Activated T-helper 2 cell treated with anti-CD3 and anti-CD28 coated beads, Interferon-gamma antibody, Interleukin-2, Interleukin-4, amounts not matched to agents 10 μg/mL and 5 μg/mL and 100 μg/mL, durations not matched to agents 14 hours and 24 hours and 36 hours (primary cell): ENCODE measurements at regions of chr3 and their contacts with region 1.

Region 1: GRCh38 chr3:138578141-138578540 is 15.9 kb downstream of the CEP70 start:
- DNase-seq: no peak
- H3K4me3 Mint-ChIP-seq: peak overlapping the region; percentile 62
- H3K27ac Mint-ChIP-seq: peak overlapping the region; percentile 87
- H3K4me1 Mint-ChIP-seq: peaks cover 32% of the 10 kb centered on the region
- H3K27me3 Mint-ChIP-seq: no peaks in the 10 kb centered on the region

Region 2: GRCh38 chr3:138513090-138513843 is 64.9 kb before region 1 on chr3:
- intact Hi-C with region 1: loop called (anchors 5 kb)
- DNase-seq: no peak
- H3K4me3 Mint-ChIP-seq: no peak overlapping the region
- H3K27ac Mint-ChIP-seq: peak overlapping the region; percentile 42
- H3K4me1 Mint-ChIP-seq: peaks cover 25% of the 10 kb centered on the region
- H3K27me3 Mint-ChIP-seq: no peaks in the 10 kb centered on the region

Region 3: DNA sequence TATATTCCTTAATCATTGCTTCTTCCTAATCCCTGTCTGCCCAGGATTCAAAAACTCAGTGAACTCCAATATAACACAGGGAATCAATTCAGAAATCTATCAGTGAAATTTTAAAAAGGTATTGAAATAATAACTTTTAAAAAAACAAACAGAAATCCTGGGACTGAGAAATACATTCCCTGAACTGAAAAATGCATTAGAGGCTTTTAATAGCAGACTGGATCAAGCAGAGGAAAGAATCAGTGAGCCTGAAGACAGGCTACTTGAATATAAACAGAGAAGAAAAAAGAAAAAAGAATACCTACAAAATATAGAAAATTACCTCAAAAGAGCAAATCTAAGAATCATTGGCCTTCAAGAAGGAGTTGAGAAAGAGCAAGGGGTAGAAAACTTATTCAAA is 38.8 kb before region 1 on chr3:
- intact Hi-C with region 1: no loop called
- DNase-seq: no peak
- H3K4me3 Mint-ChIP-seq: no peak overlapping the region
- H3K27ac Mint-ChIP-seq: no peak overlapping the region
- H3K4me1 Mint-ChIP-seq: no peaks in the 10 kb centered on the region
- H3K27me3 Mint-ChIP-seq: no peaks in the 10 kb centered on the region